ENCODE measurements at regions of chr5 and their contacts with region 1.

Region 1: DNA sequence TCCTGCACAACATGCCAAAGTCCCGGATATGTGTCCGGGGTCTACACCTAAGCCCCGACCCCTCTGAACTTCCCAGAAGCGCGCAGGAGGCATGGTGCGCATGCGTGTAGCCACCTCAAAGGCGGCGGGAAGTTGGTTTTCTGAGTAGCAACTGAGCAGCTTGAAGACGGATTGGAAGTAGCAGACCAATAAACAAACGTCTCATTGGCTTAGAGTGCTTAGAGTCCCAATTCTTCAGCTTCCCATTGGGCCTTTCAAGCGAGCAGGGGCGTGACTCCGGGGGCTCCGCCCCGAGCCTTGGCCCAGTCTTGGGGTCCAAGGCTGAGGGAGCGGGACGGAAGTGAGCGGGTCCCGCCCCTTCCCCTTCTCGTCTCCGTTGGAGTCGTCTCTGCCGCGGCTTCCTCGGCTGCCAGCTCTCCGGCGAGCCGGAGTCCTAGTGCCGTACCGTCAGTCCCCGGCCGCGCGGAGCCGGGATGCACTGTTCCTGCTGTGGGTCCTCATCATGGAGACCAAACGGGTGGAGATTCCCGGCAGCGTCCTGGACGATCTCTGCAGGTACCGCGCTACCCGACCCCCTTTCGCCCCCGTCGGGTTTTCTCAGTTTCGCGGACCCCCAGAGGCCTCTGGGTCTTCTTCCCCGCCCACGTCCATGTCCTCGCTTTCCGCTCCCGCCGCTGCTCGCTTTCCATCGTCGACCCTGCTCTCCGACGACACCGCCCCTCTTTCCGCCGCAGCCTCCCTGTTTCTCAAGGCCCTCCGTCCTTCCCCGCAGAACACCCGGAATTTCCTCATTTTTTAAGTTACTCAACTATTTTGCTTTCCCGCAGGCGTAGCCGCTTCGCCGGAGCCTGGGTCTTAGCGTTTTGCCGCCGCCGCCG is at the start of gene DCP2:
- DNase-seq: peak; percentile 98
- ATAC-seq: peak; percentile 97
- H3K4me3 ChIP-seq: peak within 1 kb of the TSS; percentile 77 to 99 (median 96)
- H3K4me3 Mint-ChIP-seq: peak within 1 kb of the TSS; percentile 97
- H3K27ac ChIP-seq: peak within 1 kb of the TSS; percentile 74 to 84
- H3K27ac Mint-ChIP-seq: peak within 1 kb of the TSS; percentile 88
- H3K4me1 ChIP-seq: peaks cover 14 to 28% of the 10 kb centered on the region in 2 donors
- H3K4me1 Mint-ChIP-seq: peaks cover 43% of the 10 kb centered on the region
- H3K27me3 ChIP-seq: no peaks in the 10 kb centered on the region
- H3K27me3 Mint-ChIP-seq: no peaks in the 10 kb centered on the region
- CTCF ChIP-seq: no peak
- total RNA-seq, gene DCP2: 64.5 and 73.1 TPM in 2 replicates

Region 2: GRCh38 chr5:111530298-111530740 is 1446.4 kb before region 1 on chr5:
- CTCF ChIA-PET with region 1: no interaction called
- POLR2A ChIA-PET with region 1: no interaction called
- intact Hi-C with region 1: loop called (anchors 1 kb)
- DNase-seq: peak; percentile 89
- ATAC-seq: peak; percentile 100
- H3K4me3 ChIP-seq: peak overlapping the region in 1 of 5 experiments; percentile 8
- H3K4me3 Mint-ChIP-seq: peak overlapping the region; percentile 53
- H3K27ac ChIP-seq: peak overlapping the region; percentile 32 to 83
- H3K27ac Mint-ChIP-seq: peak overlapping the region; percentile 69
- H3K4me1 ChIP-seq: peaks cover 13 to 17% of the 10 kb centered on the region in 2 donors
- H3K4me1 Mint-ChIP-seq: peaks cover 20% of the 10 kb centered on the region
- H3K27me3 ChIP-seq: no peaks in the 10 kb centered on the region
- H3K27me3 Mint-ChIP-seq: peaks cover 3% of the 10 kb centered on the region
- CTCF ChIP-seq: no peak

Region 3: DNA sequence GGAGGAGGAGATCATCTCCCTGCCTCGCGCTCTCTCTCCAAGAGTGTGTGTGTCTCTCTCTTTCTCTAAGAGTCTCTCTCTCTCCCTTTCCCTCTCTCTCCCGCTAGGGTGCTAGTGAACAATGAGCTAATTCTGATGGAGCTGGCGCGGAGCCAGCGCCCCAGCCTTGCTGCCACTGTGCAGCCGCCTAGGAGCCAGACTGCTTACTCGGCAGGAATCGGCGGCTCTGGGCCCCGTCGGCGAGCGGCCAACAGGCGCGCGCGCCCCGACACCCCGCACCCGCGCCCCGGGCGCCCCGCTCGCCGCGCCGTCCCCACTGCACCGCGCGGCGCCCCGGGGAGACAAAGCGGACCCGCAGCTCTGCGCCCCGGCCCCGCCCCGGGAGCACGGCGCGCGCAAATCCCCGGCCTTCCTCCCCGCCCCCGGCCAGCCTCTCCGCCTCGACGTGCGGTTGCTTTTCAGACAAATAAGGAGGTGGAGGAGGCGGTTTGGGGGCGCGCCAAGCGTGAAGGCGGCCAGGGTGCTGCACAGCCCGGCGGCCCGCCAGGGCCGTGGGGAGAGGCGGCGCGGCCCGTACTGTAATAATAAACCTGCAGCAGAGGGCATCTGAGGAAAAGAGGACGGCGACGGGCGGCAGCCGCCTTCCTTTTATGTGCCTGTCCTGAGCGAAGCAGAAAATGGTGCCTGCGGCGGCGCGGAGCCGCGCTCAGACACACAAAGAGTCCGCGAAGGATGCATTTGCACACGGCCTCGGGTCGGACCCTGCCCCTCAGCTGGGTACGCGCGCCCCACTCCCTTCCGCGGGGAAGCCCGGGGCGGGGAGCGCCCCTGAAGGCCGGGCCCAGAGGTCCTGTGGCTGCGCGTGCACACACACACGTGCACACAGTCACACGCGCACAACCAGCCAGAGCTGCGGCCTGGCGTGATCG is 1219.1 kb before region 1 on chr5:
- CTCF ChIA-PET with region 1: no interaction called
- POLR2A ChIA-PET with region 1: no interaction called
- intact Hi-C with region 1: loop called (anchors 5 kb)
- DNase-seq: peak; percentile 90
- ATAC-seq: peak; percentile 80
- H3K4me3 ChIP-seq: peak overlapping the region; percentile 68 to 83 (median 77)
- H3K4me3 Mint-ChIP-seq: peak overlapping the region; percentile 92
- H3K27ac ChIP-seq: peak overlapping the region; percentile 76 to 81
- H3K27ac Mint-ChIP-seq: peak overlapping the region; percentile 91
- H3K4me1 ChIP-seq: peaks cover 20 to 22% of the 10 kb centered on the region in 2 donors
- H3K4me1 Mint-ChIP-seq: peaks cover 21% of the 10 kb centered on the region
- H3K27me3 ChIP-seq: no peaks in the 10 kb centered on the region
- H3K27me3 Mint-ChIP-seq: peaks cover 7% of the 10 kb centered on the region
- CTCF ChIP-seq: no peak

Region 4: DNA sequence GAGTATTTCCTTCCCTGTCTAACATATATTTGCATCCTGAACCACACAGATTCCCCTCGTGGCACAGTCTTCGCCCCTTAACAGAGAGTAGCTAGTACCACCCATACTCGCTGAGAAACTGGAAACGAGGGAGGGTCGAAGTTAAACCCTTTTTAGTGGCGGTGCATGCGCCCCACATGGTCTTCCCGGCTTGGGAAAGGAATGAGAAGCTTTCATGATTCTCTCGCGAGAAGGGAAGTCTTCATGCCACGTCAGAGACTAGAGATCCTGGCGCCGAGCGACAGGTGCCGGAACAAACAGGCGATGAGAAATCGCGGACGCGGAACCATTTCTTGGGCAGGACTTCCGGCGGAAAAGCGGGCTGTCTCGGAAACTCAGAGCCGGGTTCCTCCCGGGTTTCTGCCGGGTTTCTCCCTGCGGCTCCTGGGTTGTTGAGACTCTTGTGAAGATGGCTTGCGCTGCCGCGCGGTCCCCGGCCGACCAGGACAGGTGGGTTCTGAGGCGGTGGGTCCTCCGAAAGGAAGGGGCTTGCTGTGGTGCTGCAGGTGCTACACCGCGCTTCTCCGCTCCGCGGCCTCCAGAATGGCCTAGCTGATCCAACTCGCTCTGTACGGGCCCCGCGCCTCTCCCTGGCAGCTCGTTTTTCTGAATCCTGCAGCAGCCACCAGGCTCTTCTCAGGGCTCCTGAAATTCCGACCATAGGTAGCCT is 115.6 kb before region 1 on chr5 and contains the start of gene SRP19:
- CTCF ChIA-PET with region 1: interaction called, 4 read pairs
- POLR2A ChIA-PET with region 1: interaction called, 7 read pairs
- intact Hi-C with region 1: loop called (anchors 1 kb)
- DNase-seq: peak; percentile 94
- ATAC-seq: peak; percentile 94
- H3K4me3 ChIP-seq: peak within 1 kb of the TSS; percentile 77 to 99 (median 95)
- H3K4me3 Mint-ChIP-seq: peak within 1 kb of the TSS; percentile 98
- H3K27ac ChIP-seq: peak within 1 kb of the TSS; percentile 83 to 92
- H3K27ac Mint-ChIP-seq: peak within 1 kb of the TSS; percentile 93
- H3K4me1 ChIP-seq: peaks cover 17 to 19% of the 10 kb centered on the region in 2 donors
- H3K4me1 Mint-ChIP-seq: peaks cover 30% of the 10 kb centered on the region
- H3K27me3 ChIP-seq: peaks cover 0 to 2% (median under 1%) of the 10 kb centered on the region in 4 experiments
- H3K27me3 Mint-ChIP-seq: peaks cover 17% of the 10 kb centered on the region
- CTCF ChIP-seq: no peak
- total RNA-seq, gene SRP19: 33.8 and 41.5 TPM in 2 replicates

Region 5: DNA sequence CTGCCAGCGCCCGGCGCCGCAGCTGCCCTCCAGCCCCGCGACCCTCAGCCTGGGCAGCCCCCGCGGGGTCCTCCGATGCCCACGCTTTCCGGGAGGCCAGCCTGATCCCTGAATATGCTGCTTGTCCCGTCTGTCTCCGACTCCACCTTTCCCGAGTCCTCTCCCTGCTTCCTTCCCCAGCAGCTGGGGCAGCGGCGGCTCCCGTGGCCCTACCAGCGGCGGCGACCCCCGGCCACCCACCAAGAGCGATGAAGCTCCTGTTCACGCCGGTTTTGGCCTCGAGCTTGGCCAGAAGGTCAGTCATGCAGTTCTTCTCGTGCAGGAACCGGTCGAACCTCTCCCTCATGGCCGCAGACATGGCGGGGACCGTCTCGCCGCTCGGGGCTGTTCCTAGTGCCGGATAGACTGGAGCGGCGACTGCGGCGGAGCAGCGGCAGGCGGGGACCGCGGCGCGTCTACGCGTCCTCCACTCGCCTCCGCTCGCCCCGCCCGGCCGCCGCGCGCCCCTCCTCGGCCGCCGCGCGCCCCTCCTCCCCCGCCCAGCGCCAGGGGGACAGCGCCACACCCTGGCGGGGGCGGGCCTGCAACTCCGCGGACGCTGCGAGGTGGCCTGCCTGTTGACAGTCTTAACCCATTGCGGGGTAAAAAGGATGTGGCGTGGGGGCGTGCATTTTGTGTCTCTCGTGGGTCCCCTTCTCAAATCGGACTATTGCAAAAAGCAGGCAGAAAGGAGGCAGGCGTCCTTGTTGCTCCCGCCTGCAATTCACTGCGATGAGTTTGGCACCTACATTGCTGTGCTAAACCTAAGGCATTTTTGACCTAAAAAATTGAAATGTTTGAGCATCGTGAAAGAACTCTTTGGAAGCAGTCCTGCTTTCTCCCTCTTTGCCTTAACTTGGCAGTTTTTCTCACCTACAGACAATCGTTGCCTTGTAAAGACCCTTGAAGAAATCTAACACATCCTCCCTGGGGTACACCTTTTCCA is 54.5 kb before region 1 on chr5 and contains the start of gene REEP5:
- CTCF ChIA-PET with region 1: interaction called, 41 read pairs
- POLR2A ChIA-PET with region 1: interaction called, 10 read pairs
- intact Hi-C with region 1: loop called (anchors 1 kb)
- DNase-seq: peak; percentile 91
- ATAC-seq: peak; percentile 74
- H3K4me3 ChIP-seq: peak within 1 kb of the TSS; percentile 70 to 91 (median 85)
- H3K4me3 Mint-ChIP-seq: peak within 1 kb of the TSS; percentile 94
- H3K27ac ChIP-seq: peak within 1 kb of the TSS; percentile 81 to 93
- H3K27ac Mint-ChIP-seq: peak within 1 kb of the TSS; percentile 95
- H3K4me1 ChIP-seq: peaks cover 79% of the 10 kb centered on the region in 2 donors
- H3K4me1 Mint-ChIP-seq: peaks cover 77% of the 10 kb centered on the region
- H3K27me3 ChIP-seq: no peaks in the 10 kb centered on the region
- H3K27me3 Mint-ChIP-seq: no peaks in the 10 kb centered on the region
- CTCF ChIP-seq: peak; percentile 80
- total RNA-seq, gene REEP5: 53.9 and 55.9 TPM in 2 replicates

Region 6: GRCh38 chr5:112995764-112996618 is 19.3 kb after region 1 on chr5:
- CTCF ChIA-PET with region 1: interaction called, 22 read pairs
- POLR2A ChIA-PET with region 1: no interaction called
- intact Hi-C with region 1: no loop called
- DNase-seq: peak; percentile 76
- ATAC-seq: peak; percentile 72
- H3K4me3 ChIP-seq: no peak overlapping the region
- H3K4me3 Mint-ChIP-seq: no peak overlapping the region
- H3K27ac ChIP-seq: no peak overlapping the region
- H3K27ac Mint-ChIP-seq: no peak overlapping the region
- H3K4me1 ChIP-seq: peaks cover 0 to 4% of the 10 kb centered on the region in 2 donors
- H3K4me1 Mint-ChIP-seq: peaks cover 17% of the 10 kb centered on the region
- H3K27me3 ChIP-seq: no peaks in the 10 kb centered on the region
- H3K27me3 Mint-ChIP-seq: no peaks in the 10 kb centered on the region
- CTCF ChIP-seq: peak; percentile 98

Region 7: GRCh38 chr5:113513384-113514288 is 537.0 kb after region 1 on chr5 and contains the start of gene YTHDC2:
- CTCF ChIA-PET with region 1: interaction called, 3 read pairs
- POLR2A ChIA-PET with region 1: no interaction called
- intact Hi-C with region 1: loop called (anchors 2 kb)
- DNase-seq: peak; percentile 93
- ATAC-seq: peak; percentile 97
- H3K4me3 ChIP-seq: peak within 1 kb of the TSS; percentile 59 to 93 (median 84)
- H3K4me3 Mint-ChIP-seq: peak within 1 kb of the TSS; percentile 99
- H3K27ac ChIP-seq: peak within 1 kb of the TSS; percentile 83 to 93
- H3K27ac Mint-ChIP-seq: peak within 1 kb of the TSS; percentile 95
- H3K4me1 ChIP-seq: peaks cover 7 to 17% of the 10 kb centered on the region in 2 donors
- H3K4me1 Mint-ChIP-seq: peaks cover 30% of the 10 kb centered on the region
- H3K27me3 ChIP-seq: peaks cover 0 to 8% (median 3%) of the 10 kb centered on the region in 4 experiments
- H3K27me3 Mint-ChIP-seq: peaks cover 18% of the 10 kb centered on the region
- CTCF ChIP-seq: peak; percentile 18
- total RNA-seq, gene YTHDC2: 52.6 and 62.4 TPM in 2 replicates